Breast epithelium (tissue), 4 donors: ENCODE measurements at regions of chr12 and their contacts with region 1.

Region 1: GRCh38 chr12:57861967-57862366 is 15.4 kb upstream of the CTDSP2 start:
- DNase-seq: no peak
- H3K4me3 ChIP-seq: no peak overlapping the region
- H3K27ac ChIP-seq: no peak overlapping the region
- H3K4me1 ChIP-seq: peaks cover 0 to 6% of the 10 kb centered on the region in 2 donors
- H3K27me3 ChIP-seq: no peaks in the 10 kb centered on the region
- CTCF ChIP-seq: no peak
- POLR2A ChIP-seq: no peak

Region 2: DNA sequence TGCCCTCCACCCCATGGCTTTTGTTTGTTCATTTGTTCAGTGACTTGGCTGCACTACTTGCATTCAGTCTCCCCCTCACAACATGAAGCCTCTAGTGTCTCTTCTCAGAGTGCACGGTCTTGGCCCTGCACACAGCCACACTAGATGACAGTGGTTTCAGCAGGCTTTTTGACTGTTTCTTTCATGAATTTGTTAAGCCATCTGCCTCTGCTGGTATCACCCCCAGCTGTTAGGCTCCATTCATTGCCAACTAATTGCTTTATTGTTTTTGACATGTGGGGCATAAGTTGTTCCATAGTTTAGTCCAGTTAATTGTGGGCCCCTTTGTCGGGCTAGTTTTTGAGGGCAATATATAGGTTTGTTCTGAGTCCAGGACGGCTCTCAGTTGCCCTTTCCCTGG is 149.3 kb before region 1 on chr12:
- intact Hi-C with region 1: no loop called
- DNase-seq: peak in 1 of 2 donors; percentile 5
- H3K4me3 ChIP-seq: no peak overlapping the region
- H3K27ac ChIP-seq: no peak overlapping the region
- H3K4me1 ChIP-seq: no peaks in the 10 kb centered on the region
- H3K27me3 ChIP-seq: no peaks in the 10 kb centered on the region
- CTCF ChIP-seq: no peak
- POLR2A ChIP-seq: no peak

Region 3: DNA sequence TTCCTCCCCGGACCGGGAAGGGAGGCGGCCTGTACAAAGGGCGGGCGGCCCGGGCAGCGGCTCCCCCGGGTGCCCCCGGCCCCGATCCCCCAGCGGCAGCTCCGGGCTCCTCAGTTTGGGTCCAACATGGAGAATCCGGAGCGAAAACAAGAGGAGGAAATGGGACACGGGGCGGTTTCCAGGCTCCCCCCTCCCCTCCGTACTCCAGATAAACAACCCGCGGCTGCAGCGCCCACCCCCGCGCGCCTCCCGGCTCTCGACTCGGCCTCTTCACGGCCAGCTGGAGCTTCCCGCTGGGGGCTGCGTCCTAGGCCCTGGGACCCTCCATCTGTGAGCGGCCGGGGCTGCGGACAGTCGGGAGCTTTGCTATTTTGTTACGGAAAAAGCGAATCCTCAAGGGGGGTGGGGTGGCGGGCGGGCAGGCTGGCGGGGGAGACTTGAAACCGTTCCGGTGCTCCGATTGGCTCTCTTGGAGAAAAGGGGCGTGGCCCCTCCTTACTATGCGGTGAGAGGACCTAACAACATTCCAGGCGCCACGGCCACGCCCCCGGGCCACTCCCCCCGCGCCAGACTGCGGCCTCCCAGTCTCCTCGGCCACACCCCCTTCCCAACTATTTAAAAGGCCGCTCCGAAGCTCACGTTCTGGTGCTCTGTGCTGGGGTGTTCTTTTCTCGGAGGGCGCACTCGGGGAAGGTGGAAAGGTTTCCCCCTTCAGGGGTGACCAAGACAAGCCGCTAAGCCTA is 15.2 kb before region 1 on chr12 and contains the start of gene CTDSP2:
- intact Hi-C with region 1: loop called (anchors 1 kb)
- DNase-seq: peak; percentile 100
- H3K4me3 ChIP-seq: peak within 1 kb of the TSS; percentile 80 to 100 (median 97)
- H3K27ac ChIP-seq: peak within 1 kb of the TSS; percentile 99 to 100
- H3K4me1 ChIP-seq: peaks cover 0 to 18% of the 10 kb centered on the region in 2 donors
- H3K27me3 ChIP-seq: no peaks in the 10 kb centered on the region
- CTCF ChIP-seq: peak in 1 of 3 donors; percentile 26
- POLR2A ChIP-seq: peak; percentile 34
- total RNA-seq, gene CTDSP2: 144 to 175 (median 167) TPM